ENCODE measurements at regions of chr16 and their contacts with region 1.

Region 1: GRCh38 chr16:72850853-72851252 is 197.1 kb downstream of the ZFHX3 start:
- DNase-seq: no peak
- ATAC-seq: peak in 1 of 2 donors; percentile 17
- H3K4me3 ChIP-seq: no peak overlapping the region
- H3K27ac ChIP-seq: peak overlapping the region; percentile 58 to 77 (median 66)
- H3K4me1 ChIP-seq: peaks cover 60 to 61% of the 10 kb centered on the region in 2 donors
- H3K27me3 ChIP-seq: no peaks in the 10 kb centered on the region
- CTCF ChIP-seq: no peak
- POLR2A ChIP-seq: no peak

Region 2: GRCh38 chr16:72787514-72788268 is 63.2 kb before region 1 on chr16:
- in situ Hi-C with region 1: no loop called
- intact Hi-C with region 1: no loop called
- DNase-seq: peak; percentile 44 to 68
- ATAC-seq: peak; percentile 66 to 86
- H3K4me3 ChIP-seq: peak overlapping the region in 3 of 4 donors; percentile 21 to 34 (median 28)
- H3K27ac ChIP-seq: peak overlapping the region; percentile 26 to 59 (median 50)
- H3K4me1 ChIP-seq: peaks cover 3% of the 10 kb centered on the region in 2 donors
- H3K27me3 ChIP-seq: no peaks in the 10 kb centered on the region
- CTCF ChIP-seq: no peak
- POLR2A ChIP-seq: peak in 1 of 2 donors; percentile 37

Region 3: DNA sequence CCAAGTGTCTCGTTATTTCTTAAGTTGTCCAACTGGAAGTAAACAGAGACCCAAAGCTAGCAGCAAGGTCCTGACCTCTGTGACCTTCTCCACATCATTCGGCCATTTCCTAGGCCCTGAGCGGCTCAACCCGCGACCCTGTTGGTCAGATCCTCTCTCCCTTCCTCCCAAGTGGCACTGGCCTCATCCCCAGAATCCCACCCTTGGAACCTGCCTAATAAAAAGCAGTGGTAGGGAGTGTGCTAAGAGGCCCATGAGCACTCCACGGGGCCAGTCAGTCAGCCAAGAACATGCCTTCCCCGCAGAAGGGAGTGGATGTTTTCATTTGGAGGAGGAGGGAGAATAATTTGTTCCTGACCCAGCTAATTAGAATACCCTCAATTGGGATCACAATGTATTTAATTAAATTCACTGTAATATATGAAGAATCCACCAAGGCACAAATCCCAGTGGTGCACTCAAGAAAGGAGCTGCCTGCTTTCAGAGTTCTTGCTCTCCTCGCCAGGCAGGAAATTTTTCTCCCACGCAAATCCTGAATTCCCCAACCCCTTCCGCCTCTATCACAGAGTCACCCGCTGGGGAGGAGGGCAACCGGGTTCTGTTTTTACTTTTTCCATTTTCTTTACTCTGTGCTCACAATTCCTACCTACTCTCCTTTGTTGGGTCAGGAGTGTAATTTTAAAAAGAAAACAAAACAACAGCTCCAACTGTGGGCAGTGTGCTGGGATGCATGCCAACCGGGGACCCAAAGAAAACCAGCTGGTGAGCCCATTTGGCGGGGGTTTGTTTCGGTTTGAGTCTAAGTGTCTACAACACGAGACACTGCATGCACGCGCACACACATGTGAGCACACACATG is 43.7 kb after region 1 on chr16:
- in situ Hi-C with region 1: no loop called
- intact Hi-C with region 1: loop called (anchors 5 kb)
- DNase-seq: no peak
- ATAC-seq: no peak
- H3K4me3 ChIP-seq: no peak overlapping the region
- H3K27ac ChIP-seq: peak overlapping the region; percentile 5 to 71 (median 32)
- H3K4me1 ChIP-seq: peaks cover 48 to 50% of the 10 kb centered on the region in 2 donors
- H3K27me3 ChIP-seq: no peaks in the 10 kb centered on the region
- CTCF ChIP-seq: no peak
- POLR2A ChIP-seq: no peak

Measured in gastrocnemius medialis (tissue), 4 donors.